ENCODE measurements at regions of chr4 and their contacts with region 1.

Region 1: DNA sequence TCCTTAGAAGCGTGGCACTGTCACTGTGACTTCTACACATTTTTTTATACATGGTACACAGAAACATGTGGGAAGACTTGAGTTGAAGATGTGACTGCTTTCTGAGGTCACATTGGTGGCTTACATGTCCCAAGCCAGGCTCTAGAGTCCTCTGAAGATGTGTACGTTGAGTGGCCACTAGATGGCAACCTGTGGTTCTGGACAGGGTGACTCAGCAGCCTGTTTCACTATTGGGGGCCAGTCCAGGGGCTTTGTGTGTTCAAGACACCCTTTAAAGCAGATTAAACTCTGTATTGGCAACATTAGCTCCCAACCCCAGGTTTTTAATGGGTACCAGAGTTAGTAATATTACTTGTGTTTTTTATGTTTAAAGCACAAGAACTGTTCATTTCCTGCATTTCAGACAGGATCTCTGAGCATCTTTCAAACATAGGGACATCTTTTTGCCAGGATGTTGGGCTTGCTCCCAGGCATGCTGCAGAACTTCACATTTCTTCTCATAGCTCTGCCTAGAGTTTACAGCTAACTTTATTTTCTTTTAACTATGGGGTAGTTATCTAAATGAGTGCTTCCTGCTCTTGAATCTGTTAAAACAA is 53.0 kb downstream of the DCUN1D4 start:
- DNase-seq: peak; percentile 68
- H3K4me3 Mint-ChIP-seq: no peak overlapping the region
- H3K27ac Mint-ChIP-seq: peak overlapping the region; percentile 76
- H3K4me1 Mint-ChIP-seq: peaks cover 11% of the 10 kb centered on the region
- H3K27me3 Mint-ChIP-seq: no peaks in the 10 kb centered on the region
- CTCF ChIP-seq: peak; percentile 44

Region 2: DNA sequence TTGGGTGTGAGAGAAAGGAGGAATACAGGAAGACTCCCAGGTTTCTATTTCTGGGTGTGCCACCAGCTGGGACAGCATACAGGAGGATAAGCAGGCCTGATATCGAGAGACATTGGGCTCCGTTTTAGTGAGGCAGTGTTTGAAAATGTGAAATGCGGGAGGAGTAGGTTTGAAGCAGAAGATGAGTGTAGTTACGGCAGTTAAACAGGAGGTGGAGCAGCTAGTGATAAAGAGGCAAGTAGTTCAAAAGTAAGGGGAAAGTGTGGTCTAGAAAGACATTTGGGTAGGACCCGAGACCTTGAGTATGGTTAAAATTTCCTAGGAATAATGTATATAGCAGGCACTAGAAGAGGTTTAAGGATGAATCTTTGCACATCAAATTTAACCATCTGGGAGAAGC is 10.5 kb before region 1 on chr4:
- CTCF ChIA-PET with region 1: interaction called, 41 read pairs
- POLR2A ChIA-PET with region 1: no interaction called
- intact Hi-C with region 1: no loop called
- DNase-seq: peak; percentile 40
- H3K4me3 Mint-ChIP-seq: no peak overlapping the region
- H3K27ac Mint-ChIP-seq: no peak overlapping the region
- H3K4me1 Mint-ChIP-seq: no peaks in the 10 kb centered on the region
- H3K27me3 Mint-ChIP-seq: no peaks in the 10 kb centered on the region
- CTCF ChIP-seq: peak; percentile 22

Region 3: DNA sequence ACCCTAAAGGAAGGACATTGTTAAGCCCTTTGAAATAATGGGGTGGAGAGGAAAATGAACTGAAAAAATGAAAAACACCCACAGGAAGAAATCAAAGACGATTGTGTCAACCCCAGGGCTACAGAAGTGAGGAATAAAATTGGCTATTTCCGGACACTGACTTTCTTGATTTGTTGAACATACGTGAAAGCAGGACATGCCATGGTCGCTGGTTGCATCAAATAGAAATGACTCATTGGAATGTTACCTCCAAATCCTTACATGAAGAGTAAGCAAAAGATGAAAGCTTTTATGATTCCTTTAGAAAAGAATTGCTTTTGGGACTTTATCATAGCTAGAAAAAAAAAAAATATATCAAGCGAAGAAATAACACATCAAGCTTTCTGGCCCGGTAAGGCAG is 22.3 kb after region 1 on chr4:
- CTCF ChIA-PET with region 1: interaction called, 11 read pairs
- POLR2A ChIA-PET with region 1: no interaction called
- intact Hi-C with region 1: no loop called
- DNase-seq: peak; percentile 14
- H3K4me3 Mint-ChIP-seq: no peak overlapping the region
- H3K27ac Mint-ChIP-seq: no peak overlapping the region
- H3K4me1 Mint-ChIP-seq: peaks cover 6% of the 10 kb centered on the region
- H3K27me3 Mint-ChIP-seq: no peaks in the 10 kb centered on the region
- CTCF ChIP-seq: no peak

Region 4: DNA sequence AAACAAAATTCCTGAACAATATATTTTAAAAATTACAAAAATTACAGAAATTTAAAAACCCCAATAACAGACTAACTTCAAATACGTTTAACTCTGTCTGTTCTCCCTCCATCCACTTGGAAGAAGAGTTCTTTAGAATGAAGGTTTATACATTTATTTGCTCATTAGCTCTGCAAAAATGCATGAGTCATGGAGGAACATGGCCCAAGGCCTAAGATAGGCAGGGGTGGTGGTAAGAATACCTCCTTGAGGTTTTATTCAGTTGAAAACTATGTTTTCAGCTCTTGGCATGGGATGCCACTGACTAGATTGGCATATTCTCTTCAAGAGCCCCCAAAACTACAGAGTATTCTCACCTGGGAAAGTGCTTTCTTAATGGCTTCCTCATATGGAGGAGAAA is 133.1 kb after region 1 on chr4:
- CTCF ChIA-PET with region 1: interaction called, 25 read pairs
- POLR2A ChIA-PET with region 1: no interaction called
- intact Hi-C with region 1: loop called (anchors 1 kb)
- DNase-seq: peak; percentile 74
- H3K4me3 Mint-ChIP-seq: no peak overlapping the region
- H3K27ac Mint-ChIP-seq: peak overlapping the region; percentile 22
- H3K4me1 Mint-ChIP-seq: peaks cover 14% of the 10 kb centered on the region
- H3K27me3 Mint-ChIP-seq: no peaks in the 10 kb centered on the region
- CTCF ChIP-seq: no peak

Region 5: GRCh38 chr4:52212702-52213101 is 316.8 kb after region 1 on chr4:
- CTCF ChIA-PET with region 1: no interaction called
- POLR2A ChIA-PET with region 1: no interaction called
- intact Hi-C with region 1: no loop called
- DNase-seq: no peak
- H3K4me3 Mint-ChIP-seq: no peak overlapping the region
- H3K27ac Mint-ChIP-seq: no peak overlapping the region
- H3K4me1 Mint-ChIP-seq: no peaks in the 10 kb centered on the region
- H3K27me3 Mint-ChIP-seq: no peaks in the 10 kb centered on the region
- CTCF ChIP-seq: no peak